PC-3 (cell line): ENCODE measurements at regions of chr7 and their contacts with region 1.

Region 1: DNA sequence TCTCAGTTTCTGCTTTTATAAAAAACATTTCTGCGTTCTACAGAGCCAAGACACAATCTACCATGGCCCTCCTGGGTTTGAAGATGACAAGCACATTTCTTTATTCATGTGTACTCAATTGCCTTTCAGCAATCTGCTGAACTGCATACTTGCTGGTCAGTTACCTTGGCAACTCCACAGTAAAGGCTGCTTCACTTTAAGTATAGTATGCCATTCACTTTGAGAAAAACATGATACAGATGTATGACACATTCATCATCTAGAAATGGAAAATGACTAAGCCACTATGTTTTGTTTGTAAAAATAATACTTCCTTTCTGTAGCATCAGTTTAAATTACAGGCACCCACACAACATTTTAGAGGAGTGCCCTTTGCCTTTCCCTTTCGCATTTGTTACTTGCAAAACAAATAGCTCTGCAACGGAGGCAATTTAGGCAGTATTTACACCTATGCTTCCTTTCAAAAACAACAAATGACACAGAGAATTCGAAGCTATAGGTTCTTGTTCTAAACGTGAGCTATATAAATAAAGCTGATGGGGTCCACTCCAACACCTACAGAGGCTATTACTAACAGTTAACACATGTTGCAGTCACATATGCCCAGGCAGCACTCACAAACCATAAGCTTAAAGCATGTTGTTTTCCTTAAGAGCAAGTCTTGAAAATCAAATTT is 23.5 kb downstream of the SGCE start:
- DNase-seq: peak; percentile 86
- ATAC-seq: peak; percentile 98
- H3K4me3 ChIP-seq: peak overlapping the region; percentile 41; the same call in 1 of the 2 replicates
- H3K27ac ChIP-seq: peak overlapping the region; percentile 62
- H3K4me1 ChIP-seq: peaks cover 20% of the 10 kb centered on the region
- H3K27me3 ChIP-seq: no peaks in the 10 kb centered on the region
- CTCF ChIP-seq: no peak

Region 2: GRCh38 chr7:94620703-94621118 is 11.8 kb before region 1 on chr7:
- CTCF ChIA-PET with region 1: interaction called, 6 read pairs
- POLR2A ChIA-PET with region 1: no interaction called
- intact Hi-C with region 1: loop called (anchors 1 kb)
- DNase-seq: peak; percentile 94
- ATAC-seq: peak; percentile 98
- H3K4me3 ChIP-seq: no peak overlapping the region
- H3K27ac ChIP-seq: peak overlapping the region; percentile 80
- H3K4me1 ChIP-seq: peaks cover 21% of the 10 kb centered on the region
- H3K27me3 ChIP-seq: no peaks in the 10 kb centered on the region
- CTCF ChIP-seq: no peak